ENCODE measurements at regions of chr7 and their contacts with region 1.

Region 1: GRCh38 chr7:149067876-149068275 is 22.6 kb downstream of the ZNF786 start:
- DNase-seq: no peak
- H3K4me3 ChIP-seq: no peak overlapping the region
- H3K27me3 ChIP-seq: no peaks in the 10 kb centered on the region
- CTCF ChIP-seq: no peak

Region 2: GRCh38 chr7:149028346-149029109 is 39.3 kb before region 1 on chr7 and contains the start of gene PDIA4:
- CTCF ChIA-PET with region 1: interaction called, 11 read pairs
- POLR2A ChIA-PET with region 1: no interaction called
- DNase-seq: peak; percentile 97
- H3K4me3 ChIP-seq: peak within 1 kb of the TSS; percentile 91
- H3K27me3 ChIP-seq: no peaks in the 10 kb centered on the region
- CTCF ChIP-seq: peak; percentile 37
- polyA plus RNA-seq, gene PDIA4: 173 and 204 TPM in 2 replicates

Region 3: DNA sequence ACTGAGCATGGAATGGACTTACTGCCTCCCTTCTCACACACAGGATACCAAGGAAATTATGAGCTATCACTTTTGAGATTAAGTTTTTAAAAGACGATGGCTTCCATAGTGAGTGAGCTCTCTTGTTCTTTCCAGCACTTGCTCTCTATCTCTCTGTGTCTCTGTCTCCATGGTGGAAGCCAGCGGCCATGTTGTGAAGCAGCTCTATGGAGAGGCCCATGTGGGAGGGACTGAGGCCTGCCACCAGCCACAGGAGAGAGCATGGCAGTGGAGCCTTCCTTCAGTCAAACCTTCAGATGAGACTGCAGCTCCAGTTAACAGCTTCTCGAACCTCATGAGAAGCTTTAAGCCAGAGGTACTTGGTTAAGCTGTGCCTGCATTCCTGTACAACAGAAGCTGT is 19.1 kb before region 1 on chr7:
- CTCF ChIA-PET with region 1: interaction called, 12 read pairs
- POLR2A ChIA-PET with region 1: no interaction called
- DNase-seq: no peak
- H3K4me3 ChIP-seq: no peak overlapping the region
- H3K27me3 ChIP-seq: no peaks in the 10 kb centered on the region
- CTCF ChIP-seq: no peak

Region 4: DNA sequence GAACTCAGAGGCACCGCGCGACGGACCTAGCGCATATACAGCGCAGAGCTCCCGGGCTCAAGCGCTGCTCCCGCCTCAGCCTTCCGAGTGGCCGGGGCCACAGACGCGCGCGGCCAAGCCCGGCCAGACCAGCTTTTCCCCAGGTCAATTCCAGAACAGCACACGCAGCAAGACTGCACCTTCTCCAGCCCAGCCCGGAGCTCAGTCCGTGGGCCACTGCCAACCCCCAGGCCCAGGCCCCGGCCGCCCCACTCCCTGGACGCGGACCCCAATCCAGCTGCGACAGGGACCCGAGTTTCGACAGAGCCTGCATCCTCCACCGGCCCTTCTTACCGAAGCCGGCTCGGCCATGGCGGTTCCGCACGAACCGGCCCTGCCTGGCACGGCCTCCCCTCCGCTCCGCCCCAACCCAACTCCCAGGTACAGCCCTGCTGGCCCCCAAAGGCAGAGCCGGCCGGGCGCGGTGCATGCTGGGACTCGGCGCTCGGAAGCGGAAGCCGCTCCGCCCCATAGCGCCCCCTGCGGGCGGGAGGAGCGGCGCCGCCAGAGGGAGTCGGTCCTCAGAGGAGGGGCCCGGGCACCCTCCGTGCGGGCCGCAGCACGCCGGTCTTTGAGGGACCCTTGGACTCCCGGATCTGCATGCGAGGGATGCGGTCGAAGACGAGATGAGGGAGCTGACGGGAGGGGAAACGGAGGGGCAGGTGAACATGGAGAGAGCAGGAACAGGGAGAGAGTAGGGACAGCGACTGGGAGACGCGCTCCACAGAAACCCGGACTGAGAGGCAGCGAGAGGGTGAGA is 58.2 kb after region 1 on chr7 and contains the start of gene ZNF425:
- CTCF ChIA-PET with region 1: interaction called, 18 read pairs
- POLR2A ChIA-PET with region 1: no interaction called
- DNase-seq: peak; percentile 48
- H3K4me3 ChIP-seq: peak within 1 kb of the TSS; percentile 91
- H3K27me3 ChIP-seq: no peaks in the 10 kb centered on the region
- CTCF ChIP-seq: peak; percentile 95
- polyA plus RNA-seq, gene ZNF425: 1.8 and 2.0 TPM in 2 replicates

Measured in BJ (cell line).